ENCODE measurements at regions of chr15 and their contacts with region 1.

Region 1: GRCh38 chr15:61834076-61834697 is 226.1 kb downstream of the VPS13C start:
- ATAC-seq: peak; percentile 70 to 85 (median 79)
- H3K4me3 ChIP-seq: no peak overlapping the region
- H3K27ac ChIP-seq: no peak overlapping the region
- H3K4me1 ChIP-seq: peaks cover 3% of the 10 kb centered on the region in 2 donors

Region 2: DNA sequence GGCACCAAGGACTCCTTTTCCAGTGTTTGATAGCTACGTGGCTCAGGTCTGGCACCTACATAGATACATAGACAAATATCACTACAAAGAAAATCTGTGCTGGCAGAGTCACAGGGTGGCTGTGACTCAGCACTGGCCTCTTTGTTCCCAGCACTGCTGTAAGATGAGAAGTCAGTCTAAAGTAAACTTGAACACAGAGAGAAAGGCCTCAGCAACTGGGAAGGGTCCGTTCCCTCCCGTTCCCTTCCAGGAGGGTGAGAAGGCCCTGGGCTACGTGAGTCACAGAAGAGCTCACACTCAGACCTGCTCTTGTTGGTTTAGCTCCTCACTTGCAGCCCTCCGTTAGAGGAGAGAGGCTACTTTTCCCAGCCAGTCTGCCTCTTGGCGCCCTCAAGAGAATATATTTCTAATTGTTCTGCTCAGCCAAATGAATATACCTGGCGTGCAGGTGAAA is 1459.5 kb before region 1 on chr15:
- in situ Hi-C with region 1: loop called in 1 of 9 experiments (anchors 25 kb)
- ATAC-seq: peak; percentile 64 to 96 (median 95)
- H3K4me3 ChIP-seq: no peak overlapping the region
- H3K27ac ChIP-seq: peak overlapping the region; percentile 61 to 71
- H3K4me1 ChIP-seq: peaks cover 51 to 52% of the 10 kb centered on the region in 2 donors

Region 3: GRCh38 chr15:60585743-60586708 is 1248.2 kb before region 1 on chr15:
- in situ Hi-C with region 1: loop called in 5 of 9 experiments (anchors 10 to 25 kb)
- ATAC-seq: peak in 5 of 8 experiments; percentile 36 to 63 (median 45)
- H3K4me3 ChIP-seq: no peak overlapping the region
- H3K27ac ChIP-seq: no peak overlapping the region
- H3K4me1 ChIP-seq: peaks cover 5 to 7% of the 10 kb centered on the region in 2 donors

Region 4: GRCh38 chr15:60592371-60593169 is 1241.6 kb before region 1 on chr15:
- in situ Hi-C with region 1: loop called in 5 of 9 experiments (anchors 10 to 25 kb)
- ATAC-seq: peak; percentile 81 to 91 (median 88)
- H3K4me3 ChIP-seq: peak overlapping the region; percentile 44 to 99 (median 78)
- H3K27ac ChIP-seq: peak overlapping the region in 1 of 2 donors; percentile 70
- H3K4me1 ChIP-seq: peaks cover 7 to 12% of the 10 kb centered on the region in 2 donors

Region 5: DNA sequence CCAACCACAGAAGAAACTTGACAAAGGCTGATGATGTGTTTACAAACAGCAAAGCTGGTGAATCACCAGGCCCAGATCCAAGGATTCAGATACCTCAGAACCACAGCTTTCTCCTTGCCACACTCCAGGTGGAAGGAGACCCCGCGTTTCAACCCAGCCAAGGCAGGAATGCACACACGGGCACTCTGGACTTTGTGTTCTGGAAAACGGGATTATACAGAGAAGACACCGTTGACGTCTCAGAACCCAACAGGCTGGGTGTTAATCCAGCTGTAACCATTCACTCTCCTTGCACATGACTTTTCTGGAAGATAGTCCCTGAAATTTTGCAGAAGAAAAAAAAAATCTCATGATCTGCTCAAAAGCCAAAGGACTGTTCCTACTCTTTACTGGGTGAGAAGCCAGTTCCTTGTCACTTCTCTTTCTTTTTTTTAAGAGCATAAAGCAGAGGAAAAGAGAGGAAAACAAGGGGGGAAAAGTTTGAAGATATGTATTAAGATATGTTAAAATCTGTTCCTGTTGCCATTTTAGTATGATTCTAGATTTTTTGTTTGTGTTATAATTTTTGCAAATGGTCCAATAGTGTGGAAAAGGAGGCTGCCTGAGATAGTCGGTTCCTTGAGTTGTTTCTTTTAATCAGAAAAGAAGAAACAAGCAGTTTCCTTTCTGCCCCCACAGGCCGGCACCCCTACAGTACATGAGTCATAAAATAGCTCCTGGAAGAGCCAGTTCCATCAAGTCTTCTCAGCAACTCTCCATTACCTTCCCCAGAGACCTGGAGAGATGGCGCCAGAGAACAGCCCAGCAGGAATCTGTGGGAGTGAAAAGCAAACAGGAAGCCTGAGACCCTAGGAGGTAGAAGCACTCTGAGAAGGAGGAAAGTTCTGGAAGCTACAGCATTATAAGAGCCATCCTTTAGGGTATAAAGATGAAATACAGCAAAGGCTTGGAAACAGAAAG is 678.2 kb before region 1 on chr15:
- in situ Hi-C with region 1: loop called in 2 of 9 experiments (anchors 25 kb)
- ATAC-seq: no peak
- H3K4me3 ChIP-seq: no peak overlapping the region
- H3K27ac ChIP-seq: no peak overlapping the region
- H3K4me1 ChIP-seq: peaks cover 5 to 14% of the 10 kb centered on the region in 2 donors

Region 6: GRCh38 chr15:61195116-61196002 is 638.8 kb before region 1 on chr15:
- in situ Hi-C with region 1: loop called in 1 of 9 experiments (anchors 25 kb)
- ATAC-seq: peak in 3 of 8 experiments; percentile 33 to 51 (median 50)
- H3K4me3 ChIP-seq: no peak overlapping the region
- H3K27ac ChIP-seq: no peak overlapping the region
- H3K4me1 ChIP-seq: peaks cover 11 to 37% of the 10 kb centered on the region in 2 donors